Astrocyte of the cerebellum (primary cell): ENCODE measurements at regions of chr11 and their contacts with region 1.

Region 1: GRCh38 chr11:45097721-45098493 is 48.5 kb upstream of the PRDM11 start:
- DNase-seq: peak; percentile 27
- H3K4me3 ChIP-seq: no peak overlapping the region
- CTCF ChIP-seq: no peak

Region 2: GRCh38 chr11:44886790-44887140 is 211.1 kb before region 1 on chr11:
- in situ Hi-C with region 1: no loop called
- DNase-seq: peak; percentile 34
- H3K4me3 ChIP-seq: no peak overlapping the region
- CTCF ChIP-seq: no peak

Region 3: DNA sequence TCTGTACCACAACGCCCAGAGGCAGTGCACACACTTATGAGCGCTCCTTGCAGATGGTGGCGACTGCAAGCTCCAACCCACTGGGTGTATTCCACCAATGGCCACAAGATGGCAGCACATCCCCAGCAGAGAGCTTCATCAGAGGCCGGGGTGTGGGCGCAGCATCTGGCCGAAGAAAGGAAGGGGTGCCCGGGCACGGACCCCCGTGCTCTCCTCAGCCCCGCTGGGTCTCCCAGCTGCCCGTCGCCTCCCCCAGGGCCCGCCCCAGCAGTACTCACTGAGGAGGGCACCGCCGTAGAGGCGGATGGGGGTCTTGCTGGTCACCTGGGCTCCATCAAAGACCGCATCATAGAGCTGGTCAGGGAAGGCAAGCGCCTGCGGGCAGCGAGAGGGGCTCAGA is 161.4 kb before region 1 on chr11:
- in situ Hi-C with region 1: loop called (anchors 10 kb)
- DNase-seq: peak; percentile 64
- H3K4me3 ChIP-seq: no peak overlapping the region
- CTCF ChIP-seq: peak; percentile 89

Region 4: GRCh38 chr11:44989831-44990566 is 107.9 kb before region 1 on chr11:
- in situ Hi-C with region 1: no loop called
- DNase-seq: no peak
- H3K4me3 ChIP-seq: no peak overlapping the region
- CTCF ChIP-seq: no peak

Region 5: GRCh38 chr11:45000918-45001317 is 97.0 kb before region 1 on chr11:
- in situ Hi-C with region 1: no loop called
- DNase-seq: no peak
- H3K4me3 ChIP-seq: no peak overlapping the region
- CTCF ChIP-seq: no peak

Region 6: GRCh38 chr11:45062971-45063611 is 34.8 kb before region 1 on chr11:
- in situ Hi-C with region 1: loop called (anchors 5 kb)
- DNase-seq: no peak
- H3K4me3 ChIP-seq: no peak overlapping the region
- CTCF ChIP-seq: no peak